ENCODE measurements at regions of chr12 and their contacts with region 1.

Region 1: DNA sequence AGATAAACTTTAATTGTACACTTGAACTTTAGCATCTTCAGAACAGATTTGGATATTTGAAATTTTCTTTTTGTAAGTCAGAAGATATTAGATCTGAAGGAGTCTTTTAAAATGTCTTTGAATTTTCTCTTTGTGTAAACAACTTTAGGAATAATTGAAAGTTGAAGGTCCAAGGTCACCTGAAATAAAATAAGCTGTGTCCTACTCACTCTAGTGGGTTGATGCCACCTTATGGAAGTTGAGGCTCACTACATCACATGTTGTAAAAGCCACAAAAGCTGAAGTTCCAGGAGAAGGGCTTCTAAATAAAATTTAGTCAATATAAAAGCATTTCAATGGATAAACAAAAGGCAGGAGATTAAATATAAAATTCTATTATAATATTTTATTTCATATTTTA is 122.0 kb upstream of the ATXN7L3B start:
- DNase-seq: no peak
- ATAC-seq: peak; percentile 75
- H3K4me3 Mint-ChIP-seq: no peak overlapping the region
- H3K27ac Mint-ChIP-seq: no peak overlapping the region
- H3K4me1 Mint-ChIP-seq: no peaks in the 10 kb centered on the region
- H3K27me3 Mint-ChIP-seq: no peaks in the 10 kb centered on the region
- CTCF ChIP-seq: peak; percentile 29

Region 2: DNA sequence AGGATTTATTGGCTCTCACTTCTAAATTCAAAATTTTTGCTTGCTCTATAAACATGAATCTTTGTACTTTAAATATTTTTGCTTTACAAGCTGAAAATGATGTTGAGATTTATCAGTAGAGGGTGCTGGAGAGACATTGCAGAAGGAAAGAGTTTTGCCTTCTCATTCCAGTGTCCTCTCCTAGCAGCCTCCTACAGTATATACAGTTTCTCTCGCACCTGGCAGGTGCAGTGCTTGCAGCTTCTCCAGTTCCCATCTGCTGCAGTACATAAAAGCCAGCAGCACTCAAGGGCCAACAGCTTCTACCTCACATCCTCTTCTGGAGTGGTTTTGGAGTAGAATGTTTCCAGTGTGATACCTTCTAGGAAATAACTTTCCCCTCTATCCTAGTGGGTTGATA is 479.8 kb before region 1 on chr12:
- CTCF ChIA-PET with region 1: interaction called, 10 read pairs
- POLR2A ChIA-PET with region 1: no interaction called
- DNase-seq: no peak
- ATAC-seq: peak; percentile 95
- H3K4me3 Mint-ChIP-seq: no peak overlapping the region
- H3K27ac Mint-ChIP-seq: no peak overlapping the region
- H3K4me1 Mint-ChIP-seq: no peaks in the 10 kb centered on the region
- H3K27me3 Mint-ChIP-seq: no peaks in the 10 kb centered on the region
- CTCF ChIP-seq: no peak

Region 3: DNA sequence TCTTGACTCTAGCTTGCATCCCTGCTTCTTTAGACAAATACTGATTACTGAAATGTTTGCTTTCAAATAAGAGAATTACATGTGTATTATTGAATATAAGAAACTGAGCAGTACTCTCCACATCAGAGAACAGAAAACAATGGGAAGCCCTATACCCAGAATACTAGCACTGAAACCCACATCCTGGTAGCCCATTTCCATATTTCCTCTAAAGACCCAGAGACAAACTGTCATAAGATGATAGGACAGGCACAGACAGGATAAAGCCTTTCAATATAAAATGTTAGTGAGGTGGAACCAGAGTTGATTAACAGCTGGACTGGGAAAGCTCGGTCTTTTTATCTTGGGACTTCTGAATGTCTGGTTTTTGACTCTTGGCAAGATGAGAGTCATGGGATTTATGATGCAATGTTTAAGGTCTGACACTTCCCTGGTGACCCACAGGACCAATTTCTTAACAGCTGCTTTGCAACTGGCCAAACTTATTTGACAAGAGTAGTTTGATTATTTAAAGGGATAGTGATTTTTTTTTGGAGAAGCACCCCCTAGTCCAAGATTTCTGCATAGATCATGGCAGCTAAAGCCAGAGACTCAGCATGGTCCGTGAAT is 44.9 kb before region 1 on chr12:
- CTCF ChIA-PET with region 1: interaction called, 15 read pairs
- POLR2A ChIA-PET with region 1: no interaction called
- DNase-seq: no peak
- ATAC-seq: no peak
- H3K4me3 Mint-ChIP-seq: no peak overlapping the region
- H3K27ac Mint-ChIP-seq: no peak overlapping the region
- H3K4me1 Mint-ChIP-seq: no peaks in the 10 kb centered on the region
- H3K27me3 Mint-ChIP-seq: no peaks in the 10 kb centered on the region
- CTCF ChIP-seq: no peak

Measured in WTC11 (cell line).